ENCODE measurements at regions of chr17 and their contacts with region 1.

Region 1: GRCh38 chr17:45098869-45099616 is 33.3 kb downstream of the PLCD3 start:
- DNase-seq: peak; percentile 89
- CTCF ChIP-seq: peak; percentile 75

Region 2: DNA sequence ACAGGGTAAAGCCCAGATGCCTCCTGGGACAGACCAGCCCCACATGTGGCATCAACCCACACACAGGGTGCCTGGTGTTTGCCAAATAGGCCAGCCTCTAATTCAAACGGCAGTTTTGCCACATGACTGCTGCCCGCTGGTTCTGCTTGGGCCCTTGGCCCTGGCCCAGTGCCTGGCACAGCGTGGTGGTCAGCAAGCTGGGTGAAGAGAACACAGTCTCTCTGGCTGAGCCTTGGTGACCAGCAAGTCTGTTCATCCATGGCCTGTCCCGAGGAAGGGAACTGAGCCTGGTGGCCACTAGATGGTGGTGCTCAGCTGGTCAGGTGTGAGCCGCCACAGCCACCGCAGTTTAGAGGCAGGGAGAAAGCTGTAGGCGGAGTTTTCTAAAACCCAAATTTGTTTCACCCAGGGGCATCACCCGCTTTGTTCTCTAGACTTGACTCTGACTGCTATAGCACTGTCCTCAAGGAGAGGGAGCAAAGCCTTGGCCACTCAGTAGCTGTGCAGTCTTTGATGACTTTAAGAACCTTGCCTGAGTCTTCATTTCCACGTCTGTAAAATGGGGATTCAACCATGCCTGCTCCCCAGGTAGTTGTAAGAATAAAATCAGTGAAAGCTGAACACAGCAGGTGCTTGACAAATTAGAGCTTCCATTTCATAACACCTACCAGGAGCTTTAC is 179.0 kb before region 1 on chr17:
- CTCF ChIA-PET with region 1: interaction called, 87 read pairs
- POLR2A ChIA-PET with region 1: no interaction called
- DNase-seq: peak; percentile 90
- CTCF ChIP-seq: peak; percentile 92

Region 3: DNA sequence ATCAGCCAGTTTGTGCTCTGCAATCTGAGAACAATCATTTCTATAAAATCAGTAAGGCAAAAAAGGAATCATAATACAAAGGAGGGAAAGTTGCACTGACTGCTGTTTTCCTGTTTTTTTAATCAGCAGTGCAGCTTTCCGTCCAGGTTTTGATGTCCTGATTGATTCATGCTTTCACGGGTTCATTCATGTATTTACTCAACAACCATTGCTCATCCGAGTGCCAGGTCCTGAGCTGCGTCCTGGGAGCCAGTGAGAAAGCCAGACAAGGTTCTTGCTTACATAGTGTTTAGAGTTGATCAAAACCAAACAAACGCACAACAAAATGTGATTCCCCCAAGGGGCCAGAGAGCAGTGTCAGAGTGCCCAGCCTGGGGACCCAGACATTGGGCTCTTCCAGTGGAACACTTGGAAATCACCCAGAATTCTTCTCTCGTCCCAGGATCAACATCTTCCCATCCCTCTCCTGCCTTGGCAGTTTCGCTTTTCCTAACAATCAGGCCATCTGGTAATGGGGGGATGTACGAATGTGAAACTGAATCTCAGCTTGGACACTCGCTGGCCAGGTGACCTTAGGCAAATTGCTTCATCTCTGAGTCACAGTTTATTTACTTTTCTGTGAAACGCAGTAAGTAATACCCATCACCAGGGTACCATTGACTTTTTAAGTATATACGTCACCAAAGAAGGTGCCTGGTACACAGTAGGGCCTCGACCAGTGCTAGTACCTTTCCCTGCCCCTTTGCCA is 117.6 kb before region 1 on chr17:
- CTCF ChIA-PET with region 1: no interaction called
- POLR2A ChIA-PET with region 1: no interaction called
- DNase-seq: no peak
- CTCF ChIP-seq: no peak

Region 4: DNA sequence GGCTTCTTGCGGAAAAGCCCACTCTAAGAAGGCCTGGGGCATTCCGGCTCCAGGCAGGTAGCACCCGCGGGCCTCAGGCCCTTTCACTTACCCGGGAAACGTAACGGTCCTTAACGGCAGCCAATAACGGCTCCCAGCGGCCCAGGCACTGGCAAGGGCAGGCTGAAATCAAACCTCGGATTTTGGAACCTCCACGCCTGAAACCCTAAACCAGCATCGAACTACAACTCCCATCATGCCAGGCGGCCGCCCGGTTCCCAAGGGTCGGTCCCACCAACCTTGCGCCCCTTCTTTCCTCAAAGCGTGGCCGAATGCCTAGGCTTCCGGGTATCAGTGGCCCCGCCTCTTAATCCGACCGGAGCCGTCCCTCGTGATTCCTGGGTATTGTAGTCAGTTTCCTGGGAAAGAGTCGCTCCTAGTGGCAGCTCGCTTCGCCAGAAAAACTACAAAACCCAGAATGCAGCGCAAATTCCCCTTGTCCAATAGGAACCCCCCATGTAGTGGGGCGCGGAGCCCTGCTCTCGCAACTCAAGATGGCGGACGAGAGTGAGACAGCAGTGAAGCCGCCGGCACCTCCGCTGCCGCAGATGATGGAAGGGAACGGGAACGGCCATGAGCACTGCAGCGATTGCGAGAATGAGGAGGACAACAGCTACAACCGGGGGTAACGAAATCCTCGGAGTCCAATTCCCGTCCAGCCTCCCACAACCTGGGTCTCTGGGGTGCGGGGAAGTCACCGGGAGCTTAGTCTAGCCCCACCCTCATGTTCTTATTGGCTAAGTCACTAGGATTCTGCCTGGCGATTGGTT is 38.0 kb before region 1 on chr17 and contains the start of gene NMT1:
- CTCF ChIA-PET with region 1: interaction called, 12 read pairs
- POLR2A ChIA-PET with region 1: no interaction called
- DNase-seq: peak; percentile 92
- CTCF ChIP-seq: no peak

Region 5: GRCh38 chr17:45073414-45074070 is 25.5 kb before region 1 on chr17:
- CTCF ChIA-PET with region 1: interaction called, 20 read pairs
- POLR2A ChIA-PET with region 1: no interaction called
- DNase-seq: no peak
- CTCF ChIP-seq: no peak

Region 6: DNA sequence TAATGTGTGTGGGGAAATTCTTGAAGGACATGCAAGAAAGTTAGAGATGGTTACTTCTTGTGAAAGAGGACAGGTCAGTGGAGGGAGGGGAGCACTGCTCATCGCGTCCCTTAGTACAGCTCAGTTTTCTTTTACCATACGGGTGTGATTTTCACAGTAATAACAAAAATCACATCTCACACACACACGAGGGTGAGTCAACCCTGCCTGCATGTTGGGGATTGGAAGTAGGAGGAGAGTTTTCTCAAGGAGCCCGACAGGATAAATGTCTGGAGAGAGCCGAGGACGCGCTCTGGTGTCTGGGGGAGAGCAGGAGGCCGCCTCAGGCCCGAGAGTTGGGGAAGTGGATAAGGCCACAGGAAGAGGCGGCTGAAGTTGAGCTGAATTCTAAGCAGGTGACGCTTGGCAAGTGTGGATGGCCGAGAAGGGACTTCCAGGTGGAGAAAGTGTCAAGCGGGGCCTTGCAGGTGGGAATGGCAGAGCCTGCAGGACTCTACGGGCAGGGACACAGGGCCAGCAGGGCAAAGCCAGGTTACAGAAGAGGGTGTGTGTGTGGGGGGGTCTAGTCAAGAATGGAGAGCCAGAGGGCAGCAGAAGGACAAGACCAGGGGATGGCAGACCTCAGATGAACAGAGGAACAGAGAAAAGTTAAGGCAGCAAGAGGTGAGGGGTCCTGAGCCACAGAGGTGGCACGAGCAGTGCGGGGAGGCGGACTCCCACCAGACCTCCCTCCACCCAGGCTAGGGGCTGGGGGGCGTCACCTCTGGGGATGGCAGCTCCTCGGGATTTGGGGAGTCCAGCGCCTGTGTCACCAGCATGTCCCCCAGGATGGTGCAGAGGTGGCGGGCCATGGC is 17.1 kb after region 1 on chr17:
- CTCF ChIA-PET with region 1: interaction called, 30 read pairs
- POLR2A ChIA-PET with region 1: no interaction called
- DNase-seq: no peak
- CTCF ChIP-seq: no peak